ENCODE measurements at regions of chr10 and their contacts with region 1.

Region 1: DNA sequence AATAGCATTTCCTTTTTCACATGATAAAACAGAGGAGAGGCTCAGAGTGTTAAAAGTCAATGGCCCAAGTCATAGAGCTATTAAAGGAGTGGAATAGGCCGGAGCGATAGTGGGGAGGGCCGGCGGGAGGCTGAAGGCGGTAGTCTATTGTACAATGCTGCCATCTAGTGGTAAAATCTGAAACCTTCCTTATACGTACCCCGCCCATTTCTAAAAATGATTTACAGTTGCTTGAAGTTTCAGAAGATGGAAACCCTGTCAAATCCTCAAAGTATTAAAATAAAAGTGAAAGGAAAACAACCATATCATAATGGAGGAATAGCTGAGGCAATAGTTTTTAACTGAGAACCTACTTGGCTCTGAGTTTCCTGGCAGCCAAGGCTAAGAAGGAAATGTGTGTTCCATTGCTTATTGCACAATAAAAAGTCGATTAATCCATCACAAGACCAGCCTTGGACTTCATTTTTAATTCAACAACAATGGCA is 209.1 kb downstream of the CCSER2 start:
- DNase-seq: peak; percentile 75
- ATAC-seq: peak; percentile 62
- H3K4me3 ChIP-seq: no peak overlapping the region
- H3K27ac ChIP-seq: no peak overlapping the region
- H3K4me1 ChIP-seq: peaks cover 10% of the 10 kb centered on the region
- H3K27me3 ChIP-seq: no peaks in the 10 kb centered on the region
- CTCF ChIP-seq: peak; percentile 74

Region 2: DNA sequence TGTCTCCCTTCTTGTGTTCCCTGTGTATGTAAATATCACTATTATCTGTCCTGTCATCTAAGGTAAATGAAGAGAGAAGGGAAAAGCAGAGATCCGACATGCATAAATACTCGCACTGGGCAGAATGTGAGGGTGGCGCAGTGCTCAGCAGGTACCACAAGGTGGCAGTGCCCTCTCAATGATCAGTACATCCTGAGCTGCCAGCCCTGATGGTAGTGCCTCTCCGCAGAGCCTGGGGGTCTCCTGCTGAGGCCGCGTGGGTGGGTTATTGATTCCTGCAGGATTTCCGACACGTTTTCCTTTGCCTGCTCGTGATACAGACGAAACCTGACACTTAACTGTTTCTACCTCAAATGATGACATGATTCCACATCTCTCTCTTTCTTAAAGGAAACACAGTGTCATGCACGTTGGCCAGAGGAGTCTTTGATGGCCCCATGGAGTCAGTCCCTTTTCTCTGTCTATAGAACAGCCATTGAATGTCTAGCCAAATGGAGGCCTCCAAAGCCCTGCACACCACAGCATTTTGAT is 272.8 kb before region 1 on chr10:
- CTCF ChIA-PET with region 1: interaction called, 5 read pairs
- POLR2A ChIA-PET with region 1: no interaction called
- intact Hi-C with region 1: loop called (anchors 1 kb)
- DNase-seq: peak; percentile 67
- ATAC-seq: peak; percentile 91
- H3K4me3 ChIP-seq: no peak overlapping the region
- H3K27ac ChIP-seq: no peak overlapping the region
- H3K4me1 ChIP-seq: peaks cover 10% of the 10 kb centered on the region; the same call in 1 of the 2 replicates
- H3K27me3 ChIP-seq: 0 out of 2 replicates have a peak, but pooled peaks cover 6% of the 10 kb centered on the region
- CTCF ChIP-seq: peak; percentile 89

Region 3: GRCh38 chr10:84375011-84375410 is 162.5 kb before region 1 on chr10:
- CTCF ChIA-PET with region 1: interaction called, 8 read pairs
- POLR2A ChIA-PET with region 1: no interaction called
- intact Hi-C with region 1: loop called (anchors 1 kb)
- DNase-seq: peak; percentile 75
- ATAC-seq: no peak
- H3K4me3 ChIP-seq: no peak overlapping the region
- H3K27ac ChIP-seq: no peak overlapping the region
- H3K4me1 ChIP-seq: peaks cover 10% of the 10 kb centered on the region
- H3K27me3 ChIP-seq: no peaks in the 10 kb centered on the region
- CTCF ChIP-seq: peak; percentile 74

Region 4: GRCh38 chr10:84429926-84430520 is 107.5 kb before region 1 on chr10:
- CTCF ChIA-PET with region 1: interaction called, 18 read pairs
- POLR2A ChIA-PET with region 1: no interaction called
- intact Hi-C with region 1: loop called (anchors 1 kb)
- DNase-seq: peak; percentile 77
- ATAC-seq: peak; percentile 77
- H3K4me3 ChIP-seq: no peak overlapping the region
- H3K27ac ChIP-seq: no peak overlapping the region
- H3K4me1 ChIP-seq: peaks cover 15% of the 10 kb centered on the region
- H3K27me3 ChIP-seq: no peaks in the 10 kb centered on the region
- CTCF ChIP-seq: peak; percentile 79

Region 5: GRCh38 chr10:84478151-84478550 is 59.3 kb before region 1 on chr10:
- CTCF ChIA-PET with region 1: no interaction called
- POLR2A ChIA-PET with region 1: no interaction called
- intact Hi-C with region 1: no loop called
- DNase-seq: no peak
- ATAC-seq: no peak
- H3K4me3 ChIP-seq: no peak overlapping the region
- H3K27ac ChIP-seq: no peak overlapping the region
- H3K4me1 ChIP-seq: no peaks in the 10 kb centered on the region
- H3K27me3 ChIP-seq: no peaks in the 10 kb centered on the region
- CTCF ChIP-seq: no peak

Region 6: DNA sequence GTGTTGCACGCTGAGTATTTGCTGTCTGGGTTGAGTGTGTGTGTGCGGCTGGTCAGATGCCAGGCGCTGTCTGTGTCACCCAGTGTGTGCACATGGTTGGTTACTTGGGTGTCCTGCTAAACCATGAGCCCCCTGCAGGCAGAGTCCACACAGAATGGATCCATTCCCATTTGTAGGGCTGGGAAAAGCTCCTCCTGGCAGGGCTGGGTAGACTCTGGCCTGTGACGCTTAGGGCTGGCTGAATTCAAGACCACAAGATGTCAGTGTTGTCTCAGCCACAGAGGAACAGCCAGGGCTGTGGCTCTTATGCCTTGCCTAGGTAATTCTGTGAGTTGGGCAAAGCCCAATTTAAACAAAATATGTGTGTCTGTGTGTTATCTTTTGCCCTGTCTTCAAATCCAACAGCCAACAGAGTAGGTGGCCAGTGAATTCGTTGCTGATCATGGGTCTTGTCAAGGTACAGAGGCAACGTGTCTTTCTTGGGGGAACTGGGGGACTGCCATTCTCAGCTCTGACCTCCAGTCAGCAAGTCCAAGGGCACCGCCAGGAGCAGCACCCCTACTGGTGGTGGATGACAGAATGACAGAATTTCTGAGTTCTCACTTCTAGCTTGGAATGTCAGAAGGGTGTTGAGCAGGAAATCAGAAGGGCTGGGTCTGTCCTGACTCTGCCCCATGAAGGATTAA is 76.0 kb after region 1 on chr10:
- CTCF ChIA-PET with region 1: interaction called, 8 read pairs
- POLR2A ChIA-PET with region 1: no interaction called
- intact Hi-C with region 1: loop called (anchors 2 kb)
- DNase-seq: peak; percentile 87
- ATAC-seq: peak; percentile 99
- H3K4me3 ChIP-seq: peak overlapping the region; percentile 38; the same call in 1 of the 2 replicates
- H3K27ac ChIP-seq: no peak overlapping the region
- H3K4me1 ChIP-seq: peaks cover 6% of the 10 kb centered on the region; the same call in 1 of the 2 replicates
- H3K27me3 ChIP-seq: no peaks in the 10 kb centered on the region; the same call in 1 of the 2 replicates
- CTCF ChIP-seq: peak; percentile 90

Region 7: DNA sequence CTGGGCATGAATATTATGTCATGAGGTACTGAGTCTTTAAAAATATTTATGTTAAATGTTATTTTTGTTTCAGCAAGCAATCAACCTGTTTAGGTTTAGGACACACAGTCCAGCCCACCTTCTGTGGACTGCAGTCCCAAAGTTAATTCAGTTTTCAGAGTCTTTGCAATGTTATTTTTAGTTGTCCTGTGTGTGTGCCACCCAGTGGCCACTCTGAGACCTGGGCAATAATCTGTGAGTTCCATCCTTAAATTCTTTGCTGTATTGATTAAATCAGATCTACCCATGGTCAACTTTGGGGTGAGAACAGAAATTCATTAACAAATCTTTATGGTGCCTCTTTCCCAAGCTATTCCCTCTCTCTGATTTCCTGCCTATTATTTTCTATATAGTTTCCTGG is 206.0 kb after region 1 on chr10:
- CTCF ChIA-PET with region 1: no interaction called
- POLR2A ChIA-PET with region 1: no interaction called
- intact Hi-C with region 1: loop called (anchors 10 kb)
- DNase-seq: peak; percentile 37
- ATAC-seq: no peak
- H3K4me3 ChIP-seq: no peak overlapping the region
- H3K27ac ChIP-seq: no peak overlapping the region
- H3K4me1 ChIP-seq: no peaks in the 10 kb centered on the region
- H3K27me3 ChIP-seq: no peaks in the 10 kb centered on the region
- CTCF ChIP-seq: peak; percentile 67